Dorsolateral prefrontal cortex (tissue), 120 donors: ENCODE measurements at regions of chr10 and their contacts with region 1.

Region 1: DNA sequence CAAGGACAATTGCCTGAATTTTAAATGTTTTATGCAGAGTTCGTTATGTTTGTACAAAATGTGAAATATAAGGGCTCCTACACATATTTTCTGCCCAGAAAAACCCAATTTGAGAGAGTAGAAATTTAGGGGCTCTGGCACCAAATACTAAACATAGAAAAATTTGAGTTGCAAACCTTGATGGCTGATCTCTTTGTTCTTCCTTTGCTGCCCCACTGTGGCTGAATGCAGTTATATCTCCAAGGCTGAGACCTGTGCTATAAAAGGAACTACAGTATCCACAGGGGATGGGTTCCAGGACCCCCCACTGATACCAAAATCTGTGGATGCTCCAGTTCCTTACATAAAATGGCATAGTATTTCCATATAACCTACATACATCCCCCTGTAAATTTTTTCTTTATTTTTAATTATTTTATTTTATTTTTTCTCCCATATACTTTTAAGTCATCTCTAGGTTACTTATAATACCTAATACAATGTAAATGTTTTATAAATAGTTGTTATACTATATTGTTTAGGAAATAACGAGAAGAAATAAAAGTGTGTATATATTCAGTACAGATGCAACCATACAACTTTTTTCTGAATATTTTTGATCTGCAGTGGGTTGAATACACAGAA is 22.5 kb downstream of the CFAP43 start:
- DNase-seq: peak in 7 of 10 donors; percentile 46 to 77 (median 53)
- H3K4me3 ChIP-seq: no peak overlapping the region
- H3K27ac ChIP-seq: no peak overlapping the region
- H3K27me3 ChIP-seq: no peaks in the 10 kb centered on the region
- CTCF ChIP-seq: peak; percentile 22 to 89 (median 76)

Region 2: DNA sequence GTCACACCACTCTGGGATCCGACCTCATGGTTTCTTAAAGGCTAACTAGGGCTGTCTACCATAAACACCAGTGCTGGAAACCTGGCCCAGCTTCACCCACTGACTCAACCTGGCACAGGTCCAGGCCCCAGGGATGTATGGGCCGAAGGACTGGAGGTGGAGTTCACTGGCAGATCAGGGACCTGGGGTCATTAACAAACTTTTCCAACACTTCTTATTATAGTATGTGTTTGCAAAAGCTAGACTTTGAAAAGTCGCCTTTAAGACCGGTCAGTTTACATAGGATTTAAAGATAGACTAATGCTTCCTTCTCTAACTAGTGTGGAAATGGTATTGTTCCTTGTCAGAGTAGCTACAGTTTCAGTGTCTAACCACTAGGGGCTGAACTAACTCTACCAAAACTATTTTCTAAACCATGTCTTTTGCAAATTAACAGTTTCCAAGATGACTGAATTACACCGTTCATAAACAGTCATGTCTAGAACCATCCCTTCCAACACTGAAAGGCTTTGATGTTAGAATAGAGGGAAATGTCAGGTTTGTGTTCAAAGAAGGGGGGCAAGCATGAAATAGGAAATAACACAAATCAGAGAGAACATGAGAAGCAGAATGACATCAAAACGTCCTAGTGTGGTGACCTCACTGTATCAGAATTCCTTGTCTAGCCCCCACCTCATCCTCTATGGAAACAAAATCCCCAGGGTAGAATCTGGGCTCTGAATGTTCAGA is 321.4 kb before region 1 on chr10:
- intact Hi-C with region 1: loop called (anchors 5 to 10 kb)
- DNase-seq: peak in 1 of 10 donors; percentile 16
- H3K4me3 ChIP-seq: no peak overlapping the region
- H3K27ac ChIP-seq: peak overlapping the region in 44 of 59 donors; percentile 8 to 81 (median 58)
- H3K27me3 ChIP-seq: no peaks in the 10 kb centered on the region
- CTCF ChIP-seq: peak; percentile 61 to 95 (median 86)

Region 3: GRCh38 chr10:103895411-103896186 is 314.1 kb before region 1 on chr10:
- intact Hi-C with region 1: loop called in 1 of 2 experiments (anchors 10 kb)
- DNase-seq: no peak
- H3K4me3 ChIP-seq: no peak overlapping the region
- H3K27ac ChIP-seq: peak overlapping the region in 47 of 59 donors; percentile 21 to 87 (median 62)
- H3K27me3 ChIP-seq: no peaks in the 10 kb centered on the region
- CTCF ChIP-seq: no peak

Region 4: DNA sequence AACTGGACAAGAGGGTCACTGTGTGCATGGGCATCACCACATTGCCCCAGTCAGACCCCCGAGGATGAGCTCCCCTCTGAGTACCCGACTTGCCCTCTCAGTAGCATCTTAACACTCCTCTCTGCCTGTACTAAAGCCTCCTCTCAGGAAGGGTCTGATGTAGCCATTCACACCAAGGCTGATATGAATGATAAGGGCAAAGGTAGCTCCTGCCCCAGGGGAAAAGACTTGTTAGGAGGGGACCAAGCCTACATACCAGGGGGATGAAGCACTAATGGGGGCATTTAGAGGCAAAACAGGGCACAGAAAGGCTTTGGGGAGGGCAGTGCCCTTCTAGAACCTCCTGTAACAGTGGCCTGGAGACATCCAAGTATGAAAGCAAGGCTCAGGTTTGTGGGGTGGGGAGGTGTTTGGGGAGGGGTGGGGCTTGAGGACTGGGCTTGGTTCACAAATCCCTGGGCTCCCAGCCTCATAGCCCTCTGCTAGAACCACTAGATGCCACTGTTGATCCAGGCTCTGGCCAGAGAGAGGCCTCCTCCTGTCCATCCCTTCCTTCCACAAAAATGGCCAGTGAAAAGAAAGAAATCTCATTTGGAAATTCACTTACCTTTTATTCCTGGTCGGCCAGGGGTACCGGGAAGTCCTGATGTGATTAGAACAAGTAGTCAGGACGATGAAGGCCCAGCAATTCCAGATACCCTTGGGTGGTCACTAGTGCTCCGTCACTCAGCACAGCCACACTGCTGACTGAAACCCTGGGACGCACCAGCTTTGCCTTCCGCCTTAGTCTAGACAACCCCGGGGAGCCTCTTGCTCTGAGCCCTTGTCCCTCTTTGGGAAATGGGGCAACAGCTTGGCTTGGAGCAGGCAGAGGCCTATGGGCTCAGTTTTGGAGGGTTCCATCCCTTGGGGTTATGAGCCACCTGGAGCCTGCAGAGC is 164.3 kb before region 1 on chr10:
- intact Hi-C with region 1: loop called (anchors 2 to 5 kb)
- DNase-seq: peak in 8 of 10 donors; percentile 25 to 74 (median 65)
- H3K4me3 ChIP-seq: no peak overlapping the region
- H3K27ac ChIP-seq: peak overlapping the region in 27 of 59 donors; percentile 3 to 76 (median 42)
- H3K27me3 ChIP-seq: no peaks in the 10 kb centered on the region
- CTCF ChIP-seq: peak in 55 of 56 donors; percentile 38 to 88 (median 71)

Region 5: GRCh38 chr10:104127411-104127810 is 82.3 kb before region 1 on chr10:
- intact Hi-C with region 1: loop called in 1 of 2 experiments (anchors 5 kb)
- DNase-seq: peak in 2 of 10 donors; percentile 32 to 41
- H3K4me3 ChIP-seq: no peak overlapping the region
- H3K27ac ChIP-seq: peak overlapping the region in 47 of 59 donors; percentile 1 to 76 (median 51)
- H3K27me3 ChIP-seq: no peaks in the 10 kb centered on the region
- CTCF ChIP-seq: peak in 28 of 56 donors; percentile 9 to 50 (median 30)

Region 6: GRCh38 chr10:104146882-104147281 is 62.8 kb before region 1 on chr10:
- intact Hi-C with region 1: loop called in 1 of 2 experiments (anchors 5 kb)
- DNase-seq: peak in 5 of 10 donors; percentile 47 to 76 (median 51)
- H3K4me3 ChIP-seq: peak overlapping the region in 1 of 59 donors; percentile 6
- H3K27ac ChIP-seq: peak overlapping the region; percentile 54 to 97 (median 93)
- H3K27me3 ChIP-seq: no peaks in the 10 kb centered on the region
- CTCF ChIP-seq: peak in 35 of 56 donors; percentile 6 to 49 (median 28)